GM12878 (cell line): ENCODE measurements at regions of chr7 and their contacts with region 1.

Region 1: GRCh38 chr7:24572997-24573625 is at the start of gene PALS2:
- DNase-seq: no peak
- ATAC-seq: peak; percentile 61
- H3K4me3 ChIP-seq: peak within 1 kb of the TSS; percentile 81
- H3K27ac ChIP-seq: peak within 1 kb of the TSS; percentile 60
- H3K4me1 ChIP-seq: peaks cover under 1% of the 10 kb centered on the region; the same call in 1 of the 2 replicates
- H3K27me3 ChIP-seq: peaks cover 0 to 2% of the 10 kb centered on the region in 2 experiments; a peak in 3 of 4 replicates
- CTCF ChIP-seq: no peak
- EP300 ChIP-seq: no peak
- POLR2A ChIP-seq: peak; percentile 66
- RAD21 ChIP-seq: no peak
- polyA plus RNA-seq, gene PALS2: 15.2 to 21.6 TPM

Region 2: GRCh38 chr7:24395512-24395911 is 177.6 kb before region 1 on chr7:
- CTCF ChIA-PET with region 1: no interaction called
- POLR2A ChIA-PET with region 1: no interaction called
- RAD21 ChIA-PET with region 1: no interaction called
- SMC1A ChIA-PET with region 1: no interaction called
- in situ Hi-C with region 1: no loop called
- intact Hi-C with region 1: no loop called
- DNase-seq: no peak
- ATAC-seq: no peak
- H3K4me3 ChIP-seq: no peak overlapping the region
- H3K27ac ChIP-seq: no peak overlapping the region
- H3K4me1 ChIP-seq: no peaks in the 10 kb centered on the region
- H3K27me3 ChIP-seq: no peaks in the 10 kb centered on the region
- CTCF ChIP-seq: no peak
- EP300 ChIP-seq: no peak
- POLR2A ChIP-seq: no peak
- RAD21 ChIP-seq: no peak

Region 3: GRCh38 chr7:24540956-24541355 is 32.2 kb before region 1 on chr7:
- CTCF ChIA-PET with region 1: no interaction called
- POLR2A ChIA-PET with region 1: no interaction called
- RAD21 ChIA-PET with region 1: no interaction called
- SMC1A ChIA-PET with region 1: no interaction called
- in situ Hi-C with region 1: no loop called
- intact Hi-C with region 1: loop called (anchors 5 kb)
- DNase-seq: no peak
- ATAC-seq: no peak
- H3K4me3 ChIP-seq: no peak overlapping the region
- H3K27ac ChIP-seq: no peak overlapping the region
- H3K4me1 ChIP-seq: no peaks in the 10 kb centered on the region
- H3K27me3 ChIP-seq: no peaks in the 10 kb centered on the region
- CTCF ChIP-seq: no peak
- EP300 ChIP-seq: no peak
- POLR2A ChIP-seq: no peak
- RAD21 ChIP-seq: no peak

Region 4: GRCh38 chr7:24595671-24596418 is 22.7 kb after region 1 on chr7:
- CTCF ChIA-PET with region 1: interaction called, 147 read pairs
- POLR2A ChIA-PET with region 1: no interaction called
- RAD21 ChIA-PET with region 1: interaction called, 17 read pairs
- SMC1A ChIA-PET with region 1: interaction called, 67 read pairs
- in situ Hi-C with region 1: no loop called
- intact Hi-C with region 1: no loop called
- DNase-seq: no peak
- ATAC-seq: peak; percentile 81
- H3K4me3 ChIP-seq: peak overlapping the region; percentile 43; the same call in 1 of the 2 replicates
- H3K27ac ChIP-seq: peak overlapping the region; percentile 92
- H3K4me1 ChIP-seq: peaks cover 19% of the 10 kb centered on the region
- H3K27me3 ChIP-seq: no peaks in the 10 kb centered on the region
- CTCF ChIP-seq: no peak
- EP300 ChIP-seq: no peak
- POLR2A ChIP-seq: no peak
- RAD21 ChIP-seq: no peak

Region 5: DNA sequence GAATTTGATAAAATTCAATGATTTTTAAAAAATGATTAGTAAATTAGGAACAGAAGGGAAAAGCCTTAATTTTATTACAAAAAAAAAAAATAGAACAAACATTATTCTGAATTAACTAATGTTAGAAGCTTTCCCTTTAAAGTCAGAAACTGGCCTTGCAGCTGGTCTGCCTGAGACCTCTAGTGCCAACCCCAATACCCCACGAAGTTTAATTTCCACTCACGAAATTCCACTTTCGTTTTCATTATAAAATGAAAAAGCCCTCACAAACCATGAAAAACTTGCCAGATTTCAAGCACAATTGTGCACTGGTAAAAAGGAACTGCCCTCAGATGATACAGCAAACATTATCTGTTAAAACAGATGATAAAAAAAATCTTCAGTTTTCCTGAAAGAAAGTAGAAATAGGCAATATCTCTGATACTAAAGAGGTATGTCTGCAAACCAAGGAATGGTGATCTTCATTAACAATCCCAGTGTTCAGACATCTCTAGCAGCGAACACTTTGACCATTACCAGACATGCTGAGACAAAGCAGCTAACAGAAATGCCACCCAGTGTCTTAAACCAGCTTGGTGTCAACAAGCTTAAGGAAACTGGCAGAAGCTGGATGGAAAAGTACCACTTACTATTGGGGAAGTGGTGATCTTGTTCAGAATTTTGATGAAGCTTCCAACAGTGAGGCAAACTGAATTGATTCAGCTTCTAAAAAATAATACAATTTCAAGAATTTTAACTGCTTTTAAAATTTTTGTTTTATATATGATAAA is 80.4 kb after region 1 on chr7:
- CTCF ChIA-PET with region 1: interaction called, 10 read pairs
- POLR2A ChIA-PET with region 1: no interaction called
- RAD21 ChIA-PET with region 1: interaction called, 23 read pairs
- SMC1A ChIA-PET with region 1: interaction called, 17 read pairs
- in situ Hi-C with region 1: no loop called
- intact Hi-C with region 1: no loop called
- DNase-seq: no peak
- ATAC-seq: peak; percentile 60
- H3K4me3 ChIP-seq: no peak overlapping the region
- H3K27ac ChIP-seq: peak overlapping the region; percentile 65
- H3K4me1 ChIP-seq: no peaks in the 10 kb centered on the region
- H3K27me3 ChIP-seq: no peaks in the 10 kb centered on the region
- CTCF ChIP-seq: no peak
- EP300 ChIP-seq: no peak
- POLR2A ChIP-seq: no peak
- RAD21 ChIP-seq: no peak

Region 6: DNA sequence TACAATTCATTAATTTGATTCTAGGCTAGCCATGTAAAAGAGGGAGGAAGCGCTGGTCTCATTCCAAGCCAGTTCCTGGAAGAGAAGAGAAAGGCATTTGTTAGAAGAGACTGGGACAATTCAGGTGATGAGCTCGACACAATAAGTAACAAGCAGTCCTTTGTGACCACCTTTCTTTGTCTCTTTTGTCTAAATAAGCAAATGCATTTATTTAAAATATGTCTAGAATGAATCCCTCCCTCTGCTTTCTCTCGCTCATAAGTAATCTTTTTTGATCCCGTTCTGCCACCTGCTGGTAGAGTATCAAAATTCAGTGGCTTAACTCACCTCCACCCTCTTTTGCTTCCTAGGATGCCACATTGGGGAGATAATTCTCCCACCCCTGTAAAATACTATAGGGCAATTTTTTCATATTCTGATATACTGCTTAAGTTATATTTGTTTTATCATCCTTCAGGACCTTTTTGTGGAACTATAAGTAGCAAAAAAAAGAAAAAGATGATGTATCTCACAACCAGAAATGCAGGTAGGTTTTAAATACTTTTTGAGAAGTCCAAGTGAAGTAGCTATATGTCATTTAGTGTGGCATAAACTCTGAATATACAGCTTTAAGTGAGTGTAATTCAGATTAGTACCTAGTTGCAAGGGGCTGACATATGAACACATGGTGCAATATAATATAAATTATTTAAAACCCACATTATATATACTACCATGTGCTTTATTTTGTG is 92.6 kb after region 1 on chr7:
- CTCF ChIA-PET with region 1: interaction called, 136 read pairs
- POLR2A ChIA-PET with region 1: no interaction called
- RAD21 ChIA-PET with region 1: interaction called, 106 read pairs
- SMC1A ChIA-PET with region 1: interaction called, 142 read pairs
- in situ Hi-C with region 1: loop called (anchors 5 kb)
- intact Hi-C with region 1: loop called (anchors 1 kb)
- DNase-seq: peak; percentile 27
- ATAC-seq: peak; percentile 92
- H3K4me3 ChIP-seq: no peak overlapping the region
- H3K27ac ChIP-seq: no peak overlapping the region
- H3K4me1 ChIP-seq: no peaks in the 10 kb centered on the region
- H3K27me3 ChIP-seq: no peaks in the 10 kb centered on the region
- CTCF ChIP-seq: peak; percentile 56 to 75 (median 56); a peak in 5 of 6 replicates
- EP300 ChIP-seq: no peak
- POLR2A ChIP-seq: no peak
- RAD21 ChIP-seq: peak; percentile 82